Panc1 (cell line): ENCODE measurements at regions of chrX and their contacts with region 1.

Region 1: GRCh38 chrX:149286940-149287349 is 218.2 kb downstream of the IDS start:
- DNase-seq: peak; percentile 52
- ATAC-seq: peak; percentile 70; the same call in 1 of the 2 replicates
- H3K4me3 ChIP-seq: no peak overlapping the region
- H3K27ac ChIP-seq: no peak overlapping the region
- H3K4me1 ChIP-seq: no peaks in the 10 kb centered on the region
- H3K27me3 ChIP-seq: no peaks in the 10 kb centered on the region
- CTCF ChIP-seq: peak; percentile 80

Region 2: GRCh38 chrX:148049441-148049840 is 1237.5 kb before region 1 on chrX:
- CTCF ChIA-PET with region 1: no interaction called
- POLR2A ChIA-PET with region 1: no interaction called
- in situ Hi-C with region 1: no loop called
- intact Hi-C with region 1: loop called (anchors 5 kb)
- DNase-seq: peak; percentile 18
- ATAC-seq: no peak
- H3K4me3 ChIP-seq: no peak overlapping the region
- H3K27ac ChIP-seq: no peak overlapping the region
- H3K4me1 ChIP-seq: no peaks in the 10 kb centered on the region
- H3K27me3 ChIP-seq: no peaks in the 10 kb centered on the region
- CTCF ChIP-seq: peak; percentile 63; the same call in 1 of the 2 replicates

Region 3: DNA sequence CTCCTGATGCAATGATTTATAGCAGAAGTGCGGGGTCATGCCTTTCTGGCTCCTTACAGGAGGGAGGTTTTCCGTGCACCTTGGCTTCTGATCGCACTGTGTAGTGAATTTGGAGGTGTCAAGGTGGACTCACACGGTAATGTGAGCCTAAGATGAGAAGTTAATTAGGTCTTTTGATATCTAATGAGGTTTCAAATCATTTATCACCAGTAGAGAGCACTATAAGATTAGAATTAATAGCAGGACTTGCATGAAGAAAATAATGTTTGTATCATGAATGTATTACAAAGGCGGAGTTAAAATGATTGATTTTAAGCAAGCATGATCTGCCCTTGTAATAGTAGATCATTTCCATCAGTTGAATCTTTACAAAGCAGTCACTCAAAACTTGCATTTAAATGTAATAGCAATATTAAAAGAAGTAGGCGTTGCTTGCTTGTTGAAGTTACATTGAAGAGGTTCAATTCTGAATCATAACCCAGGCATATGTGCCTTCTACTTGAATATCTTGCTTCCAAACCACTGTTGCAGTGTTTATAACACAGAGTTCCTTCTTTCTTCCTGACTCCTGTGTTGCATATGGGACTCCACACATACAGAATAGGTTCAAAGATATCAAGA is 1153.7 kb before region 1 on chrX:
- CTCF ChIA-PET with region 1: no interaction called
- POLR2A ChIA-PET with region 1: no interaction called
- in situ Hi-C with region 1: no loop called
- intact Hi-C with region 1: loop called (anchors 5 kb)
- DNase-seq: no peak
- ATAC-seq: no peak
- H3K4me3 ChIP-seq: no peak overlapping the region
- H3K27ac ChIP-seq: no peak overlapping the region
- H3K4me1 ChIP-seq: no peaks in the 10 kb centered on the region
- H3K27me3 ChIP-seq: no peaks in the 10 kb centered on the region
- CTCF ChIP-seq: peak; percentile 18; the same call in 1 of the 2 replicates

Region 4: DNA sequence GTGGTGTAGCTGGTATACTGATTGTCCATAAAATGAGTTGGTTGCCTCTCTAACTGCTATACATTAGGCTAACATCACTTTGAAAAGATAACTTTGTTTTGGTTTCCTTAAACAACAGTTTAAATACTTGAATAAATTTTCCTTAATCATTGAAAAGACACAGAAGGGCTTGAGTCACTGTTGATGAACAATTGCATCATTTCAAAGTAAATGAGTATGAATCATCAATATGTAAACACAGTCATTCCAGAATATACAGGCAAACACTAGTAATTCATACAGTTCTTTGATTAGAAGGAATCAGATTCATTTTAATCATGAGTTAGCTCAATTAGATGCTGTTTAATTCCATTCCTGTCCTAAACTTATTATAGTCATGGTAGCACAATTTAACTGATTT is 625.9 kb before region 1 on chrX:
- CTCF ChIA-PET with region 1: no interaction called
- POLR2A ChIA-PET with region 1: no interaction called
- in situ Hi-C with region 1: no loop called
- intact Hi-C with region 1: no loop called
- DNase-seq: peak; percentile 1
- ATAC-seq: no peak
- H3K4me3 ChIP-seq: no peak overlapping the region
- H3K27ac ChIP-seq: no peak overlapping the region
- H3K4me1 ChIP-seq: no peaks in the 10 kb centered on the region
- H3K27me3 ChIP-seq: no peaks in the 10 kb centered on the region
- CTCF ChIP-seq: no peak

Region 5: GRCh38 chrX:149470955-149471354 is 184.0 kb after region 1 on chrX:
- CTCF ChIA-PET with region 1: no interaction called
- POLR2A ChIA-PET with region 1: no interaction called
- in situ Hi-C with region 1: no loop called
- intact Hi-C with region 1: loop called (anchors 5 kb)
- DNase-seq: peak; percentile 39
- ATAC-seq: peak; percentile 97
- H3K4me3 ChIP-seq: no peak overlapping the region
- H3K27ac ChIP-seq: no peak overlapping the region
- H3K4me1 ChIP-seq: no peaks in the 10 kb centered on the region
- H3K27me3 ChIP-seq: 0 out of 2 replicates have a peak, but pooled peaks cover 2% of the 10 kb centered on the region
- CTCF ChIP-seq: peak; percentile 91